Left colon (tissue), 2 donors: ENCODE measurements at regions of chr6 and their contacts with region 1.

Region 1: DNA sequence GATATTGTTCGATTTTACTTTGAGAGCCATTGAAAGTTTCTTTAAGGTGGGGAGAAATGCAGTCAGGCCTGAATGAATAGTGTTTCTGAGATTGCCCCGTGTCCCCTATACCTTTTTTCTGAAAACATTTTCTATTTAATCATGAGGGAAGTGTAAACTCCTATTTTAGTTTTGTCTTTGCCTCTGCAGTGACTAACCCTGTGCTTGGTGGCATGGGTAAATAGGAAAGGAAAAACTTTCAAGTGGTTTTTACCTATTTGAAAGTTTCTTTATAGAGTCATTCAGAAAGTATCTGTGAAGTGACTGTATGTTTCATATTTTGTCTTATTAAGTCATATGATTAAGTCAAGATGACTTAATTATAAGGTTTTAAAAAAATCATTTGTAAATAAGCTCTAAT is 14.5 kb downstream of the SNRNP48 start:
- DNase-seq: no peak
- ATAC-seq: no peak

Region 2: DNA sequence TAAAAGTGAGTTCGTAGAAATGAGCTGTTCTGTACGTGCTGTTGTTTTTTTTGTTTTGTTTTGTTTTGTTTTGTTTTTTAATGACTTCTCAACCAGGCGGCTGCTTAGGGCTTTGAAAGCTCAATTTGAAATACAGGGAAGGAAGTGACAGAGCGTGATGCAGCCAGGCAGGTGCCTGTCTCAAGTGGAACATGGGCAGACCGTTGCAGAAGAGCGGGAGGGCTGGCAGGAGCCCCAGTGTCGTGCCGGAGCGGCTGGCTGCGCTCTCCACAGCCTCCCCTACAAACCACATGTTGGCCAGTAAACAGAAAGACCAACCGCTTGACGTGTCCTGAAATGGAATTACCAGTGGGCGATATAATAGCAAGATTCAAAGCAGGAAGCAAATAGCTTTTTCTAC is 661.7 kb before region 1 on chr6:
- intact Hi-C with region 1: no loop called
- DNase-seq: peak in 1 of 2 donors; percentile 25
- ATAC-seq: no peak

Region 3: GRCh38 chr6:7300926-7301325 is 303.6 kb before region 1 on chr6:
- intact Hi-C with region 1: loop called in 1 of 2 experiments (anchors 10 kb)
- DNase-seq: no peak
- ATAC-seq: no peak

Region 4: DNA sequence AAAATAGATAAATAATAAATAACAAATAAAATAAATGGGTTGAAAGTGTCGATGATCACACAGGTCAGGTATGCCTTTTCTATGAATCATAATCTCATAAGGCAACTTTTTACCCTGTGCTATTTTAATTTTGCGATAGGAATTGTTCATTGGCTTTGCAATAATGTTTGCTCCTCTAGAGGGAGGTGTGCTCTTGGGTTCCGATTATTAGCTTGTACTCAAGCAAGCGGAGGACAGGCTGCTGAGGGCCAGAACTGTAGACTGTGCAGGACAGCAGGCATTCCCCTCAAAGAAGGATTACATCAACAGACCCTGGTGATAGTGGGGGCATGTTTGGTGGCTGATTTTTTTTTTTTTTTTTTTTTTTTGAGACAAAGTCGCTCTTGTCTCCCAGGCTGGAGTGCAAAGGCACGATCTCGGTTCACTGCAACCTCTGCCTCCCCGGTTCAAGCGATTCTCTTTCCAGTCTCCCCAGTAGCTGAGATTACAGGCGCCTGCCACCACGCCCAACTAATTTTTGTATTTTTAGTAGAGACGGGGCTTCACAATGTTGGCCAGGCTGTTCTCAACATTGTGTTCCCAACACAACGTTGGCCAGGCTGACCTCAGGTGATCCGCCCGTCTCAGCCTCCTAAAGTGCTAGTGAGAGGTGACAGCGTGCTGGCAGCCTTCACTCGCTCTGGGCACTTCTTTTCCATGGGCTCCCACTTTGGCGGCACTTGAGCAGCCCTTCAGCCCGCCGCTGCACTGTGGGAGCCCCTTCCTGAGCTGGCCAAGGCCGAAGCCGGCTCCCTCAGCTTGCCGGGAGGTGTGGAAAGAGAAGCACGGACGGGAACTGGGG is 179.3 kb before region 1 on chr6:
- intact Hi-C with region 1: no loop called
- DNase-seq: peak in 1 of 2 donors; percentile 39
- ATAC-seq: peak; percentile 98